HepG2 (cell line): ENCODE measurements at regions of chr1 and their contacts with region 1.

Region 1: DNA sequence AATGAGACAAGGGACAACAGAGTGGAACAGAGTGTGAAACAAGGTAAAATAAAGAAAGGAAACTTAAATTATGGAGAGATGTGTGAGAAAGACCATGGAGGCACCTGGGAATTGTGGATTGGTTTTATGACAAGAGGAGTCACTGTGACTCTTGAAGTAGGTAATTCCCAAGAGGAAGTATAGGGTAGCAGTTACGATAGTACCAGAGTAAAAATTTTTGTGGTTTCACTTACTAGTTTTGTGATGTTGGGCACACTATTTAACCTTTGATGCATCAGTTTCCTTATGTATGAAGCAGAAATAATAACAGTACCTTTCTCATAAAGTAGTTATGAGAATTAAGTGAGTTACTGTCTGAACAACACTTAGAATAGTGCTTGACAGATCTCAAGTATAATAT is 267.9 kb upstream of the DPYD start:
- DNase-seq: no peak
- ATAC-seq: no peak
- H3K4me3 ChIP-seq: no peak overlapping the region
- H3K27ac ChIP-seq: no peak overlapping the region
- H3K4me1 ChIP-seq: no peaks in the 10 kb centered on the region
- H3K27me3 ChIP-seq: no peaks in the 10 kb centered on the region
- CTCF ChIP-seq: no peak
- EP300 ChIP-seq: no peak
- POLR2A ChIP-seq: no peak
- RAD21 ChIP-seq: no peak

Region 2: GRCh38 chr1:97901017-97901658 is 287.6 kb before region 1 on chr1:
- CTCF ChIA-PET with region 1: no interaction called
- POLR2A ChIA-PET with region 1: no interaction called
- in situ Hi-C with region 1: no loop called
- intact Hi-C with region 1: loop called (anchors 5 kb)
- DNase-seq: no peak
- ATAC-seq: no peak
- H3K4me3 ChIP-seq: no peak overlapping the region
- H3K27ac ChIP-seq: no peak overlapping the region
- H3K4me1 ChIP-seq: no peaks in the 10 kb centered on the region
- H3K27me3 ChIP-seq: no peaks in the 10 kb centered on the region
- CTCF ChIP-seq: no peak
- EP300 ChIP-seq: no peak
- POLR2A ChIP-seq: no peak
- RAD21 ChIP-seq: no peak